Endothelial cell of umbilical vein (primary cell): ENCODE measurements at regions of chr7 and their contacts with region 1.

Region 1: GRCh38 chr7:81627536-81628287 is 142.1 kb downstream of the HGF start:
- DNase-seq: peak; percentile 80
- H3K4me3 ChIP-seq: peak overlapping the region in 2 of 3 experiments; percentile 16 to 52
- H3K27ac ChIP-seq: peak overlapping the region; percentile 97
- H3K4me1 ChIP-seq: peaks cover 27% of the 10 kb centered on the region
- H3K27me3 ChIP-seq: no peaks in the 10 kb centered on the region
- CTCF ChIP-seq: no peak
- POLR2A ChIP-seq: no peak

Region 2: GRCh38 chr7:81515009-81515408 is 112.7 kb before region 1 on chr7:
- CTCF ChIA-PET with region 1: no interaction called
- POLR2A ChIA-PET with region 1: no interaction called
- dilution Hi-C with region 1: no loop called
- intact Hi-C with region 1: loop called (anchors 10 kb)
- DNase-seq: no peak
- H3K4me3 ChIP-seq: no peak overlapping the region
- H3K27ac ChIP-seq: no peak overlapping the region
- H3K4me1 ChIP-seq: peaks cover 12% of the 10 kb centered on the region
- H3K27me3 ChIP-seq: no peaks in the 10 kb centered on the region
- CTCF ChIP-seq: no peak
- POLR2A ChIP-seq: no peak

Region 3: GRCh38 chr7:81638216-81638615 is 10.5 kb after region 1 on chr7:
- CTCF ChIA-PET with region 1: interaction called, 6 read pairs
- POLR2A ChIA-PET with region 1: no interaction called
- dilution Hi-C with region 1: no loop called
- intact Hi-C with region 1: loop called (anchors 1 kb)
- DNase-seq: peak; percentile 24
- H3K4me3 ChIP-seq: no peak overlapping the region
- H3K27ac ChIP-seq: no peak overlapping the region
- H3K4me1 ChIP-seq: no peaks in the 10 kb centered on the region
- H3K27me3 ChIP-seq: no peaks in the 10 kb centered on the region
- CTCF ChIP-seq: no peak
- POLR2A ChIP-seq: no peak

Region 4: GRCh38 chr7:81887098-81888090 is 259.7 kb after region 1 on chr7:
- CTCF ChIA-PET with region 1: no interaction called
- POLR2A ChIA-PET with region 1: no interaction called
- dilution Hi-C with region 1: no loop called
- intact Hi-C with region 1: loop called (anchors 5 kb)
- DNase-seq: peak; percentile 86
- H3K4me3 ChIP-seq: no peak overlapping the region
- H3K27ac ChIP-seq: no peak overlapping the region
- H3K4me1 ChIP-seq: peaks cover 10% of the 10 kb centered on the region
- H3K27me3 ChIP-seq: peaks cover 0 to 2% of the 10 kb centered on the region in 2 experiments
- CTCF ChIP-seq: no peak
- POLR2A ChIP-seq: peak; percentile 30

Region 5: DNA sequence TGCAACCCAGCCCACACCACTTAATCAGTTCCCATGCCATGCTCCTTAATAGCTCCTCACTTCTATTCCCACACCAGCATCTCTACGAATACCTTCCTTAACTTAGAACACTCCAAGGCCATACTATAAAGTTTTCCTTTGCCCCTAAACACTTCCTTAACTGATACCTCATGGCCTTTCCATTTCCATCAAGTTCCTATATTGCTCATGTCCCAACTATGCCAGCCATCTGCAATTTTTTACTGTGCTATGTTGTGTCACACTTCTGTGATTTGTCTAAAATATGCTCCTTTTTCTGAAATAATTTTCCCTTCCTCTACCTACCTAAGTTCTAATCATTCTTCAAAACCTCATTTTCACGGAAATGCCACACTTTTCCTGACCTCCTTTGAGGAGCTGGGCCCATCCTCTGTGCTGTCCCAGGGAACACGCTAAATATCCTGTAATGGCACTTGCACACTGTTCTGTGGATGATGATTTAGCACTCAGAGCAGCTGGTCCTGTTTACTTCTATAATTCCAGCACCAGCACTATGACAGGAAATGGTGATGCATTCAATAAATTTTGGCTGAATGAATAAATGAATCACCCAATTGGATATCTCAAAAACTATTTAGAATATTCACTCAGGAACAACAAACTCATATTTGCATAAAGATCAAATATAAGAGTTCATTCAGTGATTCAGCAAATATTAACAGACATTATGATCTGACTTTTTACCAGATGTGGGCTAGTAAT is 408.6 kb after region 1 on chr7:
- CTCF ChIA-PET with region 1: no interaction called
- POLR2A ChIA-PET with region 1: no interaction called
- dilution Hi-C with region 1: no loop called
- intact Hi-C with region 1: loop called (anchors 2 kb)
- DNase-seq: peak; percentile 90
- H3K4me3 ChIP-seq: peak overlapping the region in 1 of 3 experiments; percentile 28
- H3K27ac ChIP-seq: peak overlapping the region; percentile 90
- H3K4me1 ChIP-seq: peaks cover 58% of the 10 kb centered on the region
- H3K27me3 ChIP-seq: no peaks in the 10 kb centered on the region
- CTCF ChIP-seq: no peak
- POLR2A ChIP-seq: peak; percentile 12

Region 6: DNA sequence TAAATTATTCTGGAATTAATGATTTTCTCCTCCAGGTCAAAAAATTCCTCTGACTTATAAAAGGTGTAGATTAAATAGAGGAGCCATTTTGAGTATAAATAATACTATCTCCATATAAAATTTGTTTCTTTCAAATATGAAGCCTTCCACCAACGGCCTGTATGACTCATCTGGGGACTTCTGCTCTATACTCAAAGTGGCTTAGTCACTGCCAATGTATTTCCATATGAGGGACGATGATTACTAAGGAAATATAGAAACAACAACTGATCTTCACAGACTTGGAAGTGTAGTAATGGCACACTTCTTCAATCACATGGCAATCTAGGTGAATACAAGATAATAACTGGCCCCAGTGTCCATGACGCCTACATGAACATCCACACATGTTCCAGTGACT is 477.8 kb after region 1 on chr7:
- CTCF ChIA-PET with region 1: no interaction called
- POLR2A ChIA-PET with region 1: no interaction called
- dilution Hi-C with region 1: no loop called
- intact Hi-C with region 1: loop called (anchors 10 kb)
- DNase-seq: peak; percentile 78
- H3K4me3 ChIP-seq: no peak overlapping the region
- H3K27ac ChIP-seq: peak overlapping the region; percentile 70
- H3K4me1 ChIP-seq: peaks cover 27% of the 10 kb centered on the region
- H3K27me3 ChIP-seq: no peaks in the 10 kb centered on the region
- CTCF ChIP-seq: no peak
- POLR2A ChIP-seq: no peak